Lower leg skin (tissue), 4 donors: ENCODE measurements at regions of chr2 and their contacts with region 1.

Region 1: GRCh38 chr2:159124441-159124911 is 156.0 kb downstream of the TANC1 start:
- DNase-seq: no peak
- H3K4me3 ChIP-seq: no peak overlapping the region
- CTCF ChIP-seq: no peak
- POLR2A ChIP-seq: no peak

Region 2: GRCh38 chr2:158893026-158893425 is 231.4 kb before region 1 on chr2:
- intact Hi-C with region 1: loop called (anchors 5 kb)
- DNase-seq: peak; percentile 74 to 90
- H3K4me3 ChIP-seq: no peak overlapping the region
- CTCF ChIP-seq: no peak
- POLR2A ChIP-seq: no peak

Region 3: DNA sequence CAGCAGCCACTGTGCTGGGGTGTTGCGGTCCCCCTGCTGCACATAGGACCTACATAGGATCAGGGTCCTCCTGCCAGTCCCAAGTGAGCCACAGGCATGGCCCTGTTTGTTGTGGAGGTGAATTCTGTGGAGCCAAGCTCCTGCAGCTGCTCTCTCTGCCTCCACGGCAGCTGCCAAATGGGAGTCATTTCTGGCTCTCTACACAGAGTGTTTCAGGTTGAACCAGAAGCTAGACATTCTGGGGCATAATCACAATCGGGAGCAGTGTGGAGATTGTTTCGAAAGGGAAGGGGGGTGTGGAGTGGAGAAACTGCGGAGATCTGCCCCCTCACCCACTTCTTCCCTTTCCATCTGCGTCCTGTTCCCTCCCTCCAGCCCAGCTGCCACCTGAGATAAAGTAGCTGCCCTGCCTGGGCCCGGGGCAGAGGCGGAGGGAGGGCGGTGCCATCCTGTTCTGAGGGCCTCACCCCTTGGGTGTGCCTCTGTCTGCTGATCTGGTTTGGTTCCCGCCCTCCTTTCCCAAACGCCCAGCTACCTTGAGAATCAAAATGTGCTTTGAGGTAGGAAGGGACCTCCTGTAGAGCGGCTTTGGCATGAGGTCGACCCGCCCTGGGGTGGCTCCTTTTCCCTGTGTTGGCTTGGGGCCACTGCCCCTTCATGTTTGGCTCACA is 22.7 kb after region 1 on chr2:
- intact Hi-C with region 1: no loop called
- DNase-seq: peak; percentile 77 to 92
- H3K4me3 ChIP-seq: no peak overlapping the region
- CTCF ChIP-seq: no peak
- POLR2A ChIP-seq: no peak